ENCODE measurements at regions of chr16 and their contacts with region 1.

Region 1: GRCh38 chr16:84952335-84953189 is 58.8 kb downstream of the ZDHHC7 start:
- DNase-seq: peak; percentile 79
- ATAC-seq: peak; percentile 91
- H3K4me3 Mint-ChIP-seq: no peak overlapping the region
- H3K27ac Mint-ChIP-seq: no peak overlapping the region
- H3K4me1 Mint-ChIP-seq: no peaks in the 10 kb centered on the region
- H3K27me3 Mint-ChIP-seq: no peaks in the 10 kb centered on the region

Region 2: GRCh38 chr16:84925092-84925772 is 27.3 kb before region 1 on chr16:
- CTCF ChIA-PET with region 1: interaction called, 11 read pairs
- POLR2A ChIA-PET with region 1: no interaction called
- intact Hi-C with region 1: loop called (anchors 1 kb)
- DNase-seq: peak; percentile 86
- ATAC-seq: peak; percentile 77
- H3K4me3 Mint-ChIP-seq: no peak overlapping the region
- H3K27ac Mint-ChIP-seq: no peak overlapping the region
- H3K4me1 Mint-ChIP-seq: no peaks in the 10 kb centered on the region
- H3K27me3 Mint-ChIP-seq: no peaks in the 10 kb centered on the region

Region 3: GRCh38 chr16:84976644-84977400 is 24.3 kb after region 1 on chr16:
- CTCF ChIA-PET with region 1: interaction called, 108 read pairs
- POLR2A ChIA-PET with region 1: no interaction called
- intact Hi-C with region 1: no loop called
- DNase-seq: no peak
- ATAC-seq: no peak
- H3K4me3 Mint-ChIP-seq: no peak overlapping the region
- H3K27ac Mint-ChIP-seq: no peak overlapping the region
- H3K4me1 Mint-ChIP-seq: no peaks in the 10 kb centered on the region
- H3K27me3 Mint-ChIP-seq: no peaks in the 10 kb centered on the region

Region 4: GRCh38 chr16:85321509-85322271 is 369.1 kb after region 1 on chr16:
- CTCF ChIA-PET with region 1: no interaction called
- POLR2A ChIA-PET with region 1: no interaction called
- intact Hi-C with region 1: no loop called
- DNase-seq: no peak
- ATAC-seq: no peak
- H3K4me3 Mint-ChIP-seq: no peak overlapping the region
- H3K27ac Mint-ChIP-seq: no peak overlapping the region
- H3K4me1 Mint-ChIP-seq: no peaks in the 10 kb centered on the region
- H3K27me3 Mint-ChIP-seq: no peaks in the 10 kb centered on the region

Measured in activated CD4-positive, alpha-beta T cell treated with anti-CD3 and anti-CD28 coated beads for 36 hours (primary cell).